IMR-90 (cell line): ENCODE measurements at regions of chr16 and their contacts with region 1.

Region 1: GRCh38 chr16:68590201-68590994 is 51.3 kb downstream of the ZFP90 start:
- DNase-seq: peak; percentile 7
- ATAC-seq: peak; percentile 98
- H3K4me3 ChIP-seq: no peak overlapping the region
- H3K27ac ChIP-seq: no peak overlapping the region
- H3K4me1 ChIP-seq: no peaks in the 10 kb centered on the region
- H3K27me3 ChIP-seq: no peaks in the 10 kb centered on the region
- CTCF ChIP-seq: peak; percentile 42
- POLR2A ChIP-seq: no peak
- RAD21 ChIP-seq: peak; percentile 51

Region 2: GRCh38 chr16:68538880-68539701 is 51.3 kb before region 1 on chr16 and contains the start of gene ZFP90:
- CTCF ChIA-PET with region 1: no interaction called
- POLR2A ChIA-PET with region 1: no interaction called
- dilution Hi-C with region 1: no loop called
- in situ Hi-C with region 1: loop called (anchors 10 kb)
- intact Hi-C with region 1: no loop called
- DNase-seq: peak; percentile 78
- ATAC-seq: peak; percentile 98
- H3K4me3 ChIP-seq: peak within 1 kb of the TSS; percentile 55
- H3K27ac ChIP-seq: peak within 1 kb of the TSS; percentile 70
- H3K4me1 ChIP-seq: peaks cover 3% of the 10 kb centered on the region; the same call in 1 of the 2 replicates
- H3K27me3 ChIP-seq: no peaks in the 10 kb centered on the region
- CTCF ChIP-seq: no peak
- POLR2A ChIP-seq: no peak
- RAD21 ChIP-seq: no peak
- total RNA-seq, gene ZFP90: 17.2 and 22.6 TPM in 2 replicates

Region 3: DNA sequence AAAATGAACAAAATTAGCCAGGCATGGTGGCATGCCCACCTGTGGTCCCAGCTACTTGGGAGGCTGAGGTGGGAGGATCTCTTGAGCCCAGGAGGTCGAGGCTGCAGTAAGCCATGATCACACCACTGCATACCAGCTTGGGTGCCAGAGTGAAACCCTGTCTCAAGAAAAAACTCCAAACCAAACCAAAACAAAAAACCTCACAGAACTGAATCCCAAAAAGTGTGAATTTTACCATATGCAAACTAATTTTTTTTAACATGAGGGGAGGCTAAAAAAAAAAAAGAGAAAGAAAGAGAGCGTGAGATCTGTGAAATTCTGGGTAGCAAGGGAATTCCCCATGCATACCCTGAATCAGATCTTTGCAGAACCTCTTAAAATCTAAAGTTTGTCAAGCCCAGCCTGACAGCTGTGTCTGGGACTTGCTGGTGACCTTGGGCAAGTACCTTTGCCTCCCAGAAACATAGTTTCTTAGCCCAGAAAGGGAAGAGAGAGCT is 129.6 kb after region 1 on chr16:
- CTCF ChIA-PET with region 1: no interaction called
- POLR2A ChIA-PET with region 1: no interaction called
- dilution Hi-C with region 1: no loop called
- in situ Hi-C with region 1: no loop called
- intact Hi-C with region 1: no loop called
- DNase-seq: no peak
- ATAC-seq: no peak
- H3K4me3 ChIP-seq: no peak overlapping the region
- H3K27ac ChIP-seq: no peak overlapping the region
- H3K4me1 ChIP-seq: no peaks in the 10 kb centered on the region
- H3K27me3 ChIP-seq: no peaks in the 10 kb centered on the region
- CTCF ChIP-seq: no peak
- POLR2A ChIP-seq: no peak
- RAD21 ChIP-seq: no peak

Region 4: GRCh38 chr16:68732036-68732680 is 141.8 kb after region 1 on chr16:
- CTCF ChIA-PET with region 1: no interaction called
- POLR2A ChIA-PET with region 1: no interaction called
- dilution Hi-C with region 1: no loop called
- in situ Hi-C with region 1: no loop called
- intact Hi-C with region 1: no loop called
- DNase-seq: no peak
- ATAC-seq: no peak
- H3K4me3 ChIP-seq: no peak overlapping the region
- H3K27ac ChIP-seq: no peak overlapping the region
- H3K4me1 ChIP-seq: no peaks in the 10 kb centered on the region
- H3K27me3 ChIP-seq: peaks cover 35% of the 10 kb centered on the region
- CTCF ChIP-seq: no peak
- POLR2A ChIP-seq: no peak
- RAD21 ChIP-seq: no peak

Region 5: GRCh38 chr16:68800257-68800875 is 210.0 kb after region 1 on chr16:
- CTCF ChIA-PET with region 1: interaction called, 4 read pairs
- POLR2A ChIA-PET with region 1: no interaction called
- dilution Hi-C with region 1: no loop called
- in situ Hi-C with region 1: no loop called
- intact Hi-C with region 1: loop called (anchors 2 kb)
- DNase-seq: peak; percentile 83
- ATAC-seq: peak; percentile 97
- H3K4me3 ChIP-seq: no peak overlapping the region
- H3K27ac ChIP-seq: no peak overlapping the region
- H3K4me1 ChIP-seq: peaks cover 2% of the 10 kb centered on the region; the same call in 1 of the 2 replicates
- H3K27me3 ChIP-seq: peaks cover 6% of the 10 kb centered on the region
- CTCF ChIP-seq: peak; percentile 77
- POLR2A ChIP-seq: no peak
- RAD21 ChIP-seq: peak; percentile 61

Region 6: DNA sequence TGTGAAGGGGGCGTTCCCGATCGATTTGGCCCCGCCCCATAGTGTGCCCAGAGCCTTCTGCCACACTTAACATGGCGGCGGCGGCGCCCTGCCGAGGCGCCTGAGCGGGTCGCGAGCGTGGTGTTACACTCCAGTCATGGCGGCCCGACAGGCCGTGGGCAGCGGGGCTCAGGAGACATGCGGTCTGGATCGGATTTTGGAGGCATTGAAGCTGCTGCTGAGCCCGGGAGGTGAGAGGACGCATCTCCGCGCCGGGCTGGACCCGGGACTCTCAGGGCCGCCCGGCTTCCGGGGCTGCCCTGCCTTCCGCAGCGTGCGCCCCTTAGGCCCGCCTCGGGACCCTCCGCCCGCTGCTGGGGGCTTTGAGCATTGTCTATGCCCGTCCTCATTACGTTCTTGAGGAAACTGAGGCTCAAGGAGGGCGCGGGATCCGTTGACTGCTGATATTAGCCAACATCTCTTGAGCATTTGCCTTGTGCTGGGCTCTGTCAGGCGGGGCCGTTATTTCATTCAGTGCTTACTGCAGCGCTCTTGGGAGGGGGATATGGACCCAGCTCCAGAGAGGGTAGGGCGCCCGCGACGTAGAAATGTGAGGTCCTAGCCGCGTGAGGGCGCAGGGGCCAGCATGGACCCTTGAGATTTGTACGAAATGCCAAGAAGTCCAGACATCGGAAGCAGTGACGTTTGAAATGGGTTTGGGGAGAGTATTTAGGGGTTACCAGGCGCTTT is 253.2 kb after region 1 on chr16 and contains the start of gene TANGO6:
- CTCF ChIA-PET with region 1: no interaction called
- POLR2A ChIA-PET with region 1: no interaction called
- dilution Hi-C with region 1: no loop called
- in situ Hi-C with region 1: no loop called
- intact Hi-C with region 1: loop called (anchors 2 kb)
- DNase-seq: peak; percentile 68
- ATAC-seq: peak; percentile 95
- H3K4me3 ChIP-seq: peak within 1 kb of the TSS; percentile 89
- H3K27ac ChIP-seq: peak within 1 kb of the TSS; percentile 95
- H3K4me1 ChIP-seq: peaks cover 3% of the 10 kb centered on the region; the same call in 1 of the 2 replicates
- H3K27me3 ChIP-seq: no peaks in the 10 kb centered on the region
- CTCF ChIP-seq: peak; percentile 39
- POLR2A ChIP-seq: peak; percentile 71
- RAD21 ChIP-seq: peak; percentile 35; the same call in 1 of the 2 replicates
- total RNA-seq, gene TANGO6: 19.7 and 22.4 TPM in 2 replicates

Region 7: DNA sequence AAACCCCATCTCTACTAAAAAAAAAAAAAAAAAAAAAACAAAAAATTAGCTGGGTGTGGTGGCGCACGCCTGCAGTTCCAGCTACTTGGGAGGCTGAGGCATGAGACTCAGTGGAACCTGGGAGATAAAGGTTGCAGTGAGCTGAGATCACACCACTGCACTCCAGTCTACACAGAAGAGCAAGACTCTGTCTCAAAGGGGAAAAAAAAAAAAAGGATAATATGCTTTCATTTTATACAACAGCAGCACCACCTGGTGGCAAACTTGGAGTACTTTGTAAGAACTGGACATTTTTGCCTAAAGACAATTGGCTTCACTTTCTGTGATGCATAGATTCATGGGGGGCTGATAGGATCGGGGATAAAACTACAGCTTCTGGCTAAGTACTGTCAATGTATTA is 533.5 kb after region 1 on chr16:
- CTCF ChIA-PET with region 1: interaction called, 3 read pairs
- POLR2A ChIA-PET with region 1: no interaction called
- dilution Hi-C with region 1: no loop called
- in situ Hi-C with region 1: no loop called
- intact Hi-C with region 1: loop called (anchors 10 kb)
- DNase-seq: peak; percentile 76
- ATAC-seq: peak; percentile 81
- H3K4me3 ChIP-seq: no peak overlapping the region
- H3K27ac ChIP-seq: no peak overlapping the region
- H3K4me1 ChIP-seq: no peaks in the 10 kb centered on the region
- H3K27me3 ChIP-seq: no peaks in the 10 kb centered on the region
- CTCF ChIP-seq: peak; percentile 81
- POLR2A ChIP-seq: 0 out of 2 replicates have a peak, but pooled peaks have one; percentile 30
- RAD21 ChIP-seq: peak; percentile 86